SK-N-SH (cell line): ENCODE measurements at regions of chr5 and their contacts with region 1.

Region 1: GRCh38 chr5:145825751-145826180 is 9.4 kb downstream of the PRELID2 start:
- DNase-seq: peak; percentile 42
- H3K4me3 ChIP-seq: no peak overlapping the region
- H3K27ac ChIP-seq: no peak overlapping the region
- H3K4me1 ChIP-seq: peaks cover 0 to 24% of the 10 kb centered on the region in 2 experiments; a peak in 3 of 4 replicates
- H3K27me3 ChIP-seq: no peaks in the 10 kb centered on the region
- CTCF ChIP-seq: peak; percentile 94
- EP300 ChIP-seq: no peak
- RAD21 ChIP-seq: peak; percentile 85

Region 2: GRCh38 chr5:144203750-144204596 is 1621.8 kb before region 1 on chr5:
- CTCF ChIA-PET with region 1: interaction called, 30 read pairs
- POLR2A ChIA-PET with region 1: no interaction called
- DNase-seq: peak; percentile 34
- H3K4me3 ChIP-seq: peak overlapping the region in 1 of 2 experiments; percentile 28; a peak in 1 of 4 replicates
- H3K27ac ChIP-seq: no peak overlapping the region
- H3K4me1 ChIP-seq: peaks cover 0 to 7% of the 10 kb centered on the region in 2 experiments; a peak in 2 of 4 replicates
- H3K27me3 ChIP-seq: no peaks in the 10 kb centered on the region
- CTCF ChIP-seq: peak; percentile 98
- EP300 ChIP-seq: no peak
- RAD21 ChIP-seq: peak; percentile 98

Region 3: DNA sequence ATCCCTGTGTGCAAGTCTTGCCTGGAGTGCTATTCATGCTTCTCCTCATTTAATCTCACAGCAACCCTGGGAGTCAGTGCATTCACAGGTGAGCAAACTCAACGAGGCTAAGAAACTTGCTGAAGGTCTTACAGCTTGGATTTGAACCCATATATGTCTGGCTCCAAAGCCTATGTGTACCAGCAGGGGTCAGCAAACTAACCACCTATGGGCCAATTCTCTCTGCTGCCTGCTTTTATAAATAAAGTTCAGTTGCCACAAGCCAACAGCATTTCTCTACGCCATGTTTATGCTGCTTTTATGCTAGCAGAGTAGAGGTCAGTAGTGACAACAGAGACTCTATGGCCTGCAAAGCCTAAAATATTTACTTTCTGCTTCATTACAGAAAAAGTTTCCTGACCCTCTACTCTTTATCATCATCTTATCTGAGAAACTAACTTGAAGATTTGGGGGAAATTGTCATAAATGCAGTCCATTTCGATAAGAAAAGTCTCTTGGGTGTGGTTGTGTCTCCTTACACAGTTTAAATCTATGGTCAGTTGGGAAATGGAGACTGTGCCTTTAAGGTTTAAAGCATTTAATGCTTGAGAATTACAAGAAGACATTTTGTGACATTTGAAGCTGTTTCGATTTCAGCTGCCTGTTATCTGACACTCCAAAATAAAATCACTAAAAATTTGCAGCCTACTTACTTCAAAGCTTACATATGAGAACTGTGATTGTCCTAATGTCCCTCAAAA is 128.3 kb before region 1 on chr5:
- CTCF ChIA-PET with region 1: interaction called, 14 read pairs
- POLR2A ChIA-PET with region 1: no interaction called
- DNase-seq: peak; percentile 24
- H3K4me3 ChIP-seq: no peak overlapping the region; a peak in 1 of 4 replicates
- H3K27ac ChIP-seq: no peak overlapping the region
- H3K4me1 ChIP-seq: no peaks in the 10 kb centered on the region
- H3K27me3 ChIP-seq: no peaks in the 10 kb centered on the region
- CTCF ChIP-seq: peak; percentile 59
- EP300 ChIP-seq: no peak
- RAD21 ChIP-seq: peak; percentile 56

Region 4: DNA sequence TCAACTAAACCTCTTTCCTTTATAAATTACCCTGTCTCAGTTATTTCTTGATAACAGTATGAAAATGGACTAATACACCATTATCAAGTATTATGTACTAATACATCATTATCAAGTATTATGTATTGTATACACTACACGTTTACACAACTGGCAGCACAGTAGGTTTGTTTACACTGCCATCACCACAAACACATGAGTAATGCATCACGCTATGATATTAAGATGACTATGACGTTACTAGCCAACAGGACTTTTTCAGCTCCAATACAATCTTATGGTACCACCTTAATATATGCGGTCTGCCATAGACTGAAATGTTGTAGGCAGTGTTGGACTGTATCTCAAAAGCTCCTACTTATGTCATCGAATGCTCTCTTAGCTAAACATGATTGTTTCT is 18.9 kb before region 1 on chr5:
- CTCF ChIA-PET with region 1: interaction called, 12 read pairs
- POLR2A ChIA-PET with region 1: no interaction called
- DNase-seq: no peak
- H3K4me3 ChIP-seq: no peak overlapping the region
- H3K27ac ChIP-seq: no peak overlapping the region
- H3K4me1 ChIP-seq: no peaks in the 10 kb centered on the region
- H3K27me3 ChIP-seq: no peaks in the 10 kb centered on the region
- CTCF ChIP-seq: no peak
- EP300 ChIP-seq: no peak
- RAD21 ChIP-seq: no peak

Region 5: GRCh38 chr5:145840458-145841132 is 14.8 kb after region 1 on chr5:
- CTCF ChIA-PET with region 1: interaction called, 14 read pairs
- POLR2A ChIA-PET with region 1: interaction called, 3 read pairs
- DNase-seq: no peak
- H3K4me3 ChIP-seq: no peak overlapping the region
- H3K27ac ChIP-seq: no peak overlapping the region
- H3K4me1 ChIP-seq: peaks cover 0 to 5% of the 10 kb centered on the region in 2 experiments; a peak in 1 of 4 replicates
- H3K27me3 ChIP-seq: no peaks in the 10 kb centered on the region
- CTCF ChIP-seq: no peak
- EP300 ChIP-seq: no peak
- RAD21 ChIP-seq: no peak

Region 6: GRCh38 chr5:146041180-146041789 is 215.5 kb after region 1 on chr5:
- CTCF ChIA-PET with region 1: interaction called, 12 read pairs
- POLR2A ChIA-PET with region 1: no interaction called
- DNase-seq: no peak
- H3K4me3 ChIP-seq: no peak overlapping the region
- H3K27ac ChIP-seq: no peak overlapping the region
- H3K4me1 ChIP-seq: peaks cover 0 to 9% of the 10 kb centered on the region in 2 experiments; a peak in 2 of 4 replicates
- H3K27me3 ChIP-seq: no peaks in the 10 kb centered on the region
- CTCF ChIP-seq: peak; percentile 56
- EP300 ChIP-seq: no peak
- RAD21 ChIP-seq: 0 out of 2 replicates have a peak, but pooled peaks have one; percentile 20

Region 7: DNA sequence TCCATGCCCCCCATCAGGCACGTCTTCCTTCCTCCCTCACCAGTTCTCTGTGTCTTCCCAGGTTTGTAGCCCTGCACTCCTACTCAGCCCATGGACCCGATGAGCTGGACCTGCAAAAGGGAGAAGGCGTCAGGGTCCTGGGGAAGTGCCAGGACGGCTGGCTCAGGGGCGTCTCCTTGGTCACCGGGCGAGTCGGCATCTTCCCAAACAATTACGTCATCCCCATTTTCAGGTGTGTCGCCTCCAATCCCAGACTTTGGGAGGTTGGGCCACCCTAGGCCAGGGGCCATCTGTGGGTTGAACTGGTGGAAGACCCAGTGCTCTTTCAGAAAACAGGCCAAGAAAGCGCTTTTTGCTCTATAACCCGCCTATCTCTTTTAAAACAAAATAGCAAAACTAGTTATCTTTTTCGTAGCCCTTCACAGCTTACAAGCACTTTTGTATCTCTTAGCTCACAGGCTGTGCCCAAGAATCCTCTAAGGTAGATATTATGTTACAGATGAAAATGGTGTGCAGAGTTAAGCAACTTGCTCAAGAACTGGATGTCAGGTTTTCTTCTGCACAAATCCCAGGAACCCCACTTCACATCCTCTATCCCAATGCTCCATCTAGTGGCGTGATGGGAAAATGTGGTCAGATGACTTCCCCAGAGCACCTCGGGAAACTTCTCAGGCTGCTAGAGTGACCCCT is 223.4 kb after region 1 on chr5:
- CTCF ChIA-PET with region 1: interaction called, 13 read pairs
- POLR2A ChIA-PET with region 1: no interaction called
- DNase-seq: peak; percentile 74
- H3K4me3 ChIP-seq: no peak overlapping the region; a peak in 1 of 4 replicates
- H3K27ac ChIP-seq: no peak overlapping the region
- H3K4me1 ChIP-seq: no peaks in the 10 kb centered on the region; a peak in 2 of 4 replicates
- H3K27me3 ChIP-seq: no peaks in the 10 kb centered on the region
- CTCF ChIP-seq: peak; percentile 80
- EP300 ChIP-seq: no peak
- RAD21 ChIP-seq: peak; percentile 93